Activated CD4-positive, alpha-beta memory T cell treated with anti-CD3 and anti-CD28 coated beads, Interleukin-2, amount 10 ng/mL, durations not matched to agents 7 days and 5 days (primary cell): ENCODE measurements at regions of chr11 and their contacts with region 1.

Region 1: GRCh38 chr11:10441652-10442503 is 13.2 kb upstream of the AMPD3 start:
- DNase-seq: peak; percentile 40
- H3K4me3 Mint-ChIP-seq: no peak overlapping the region
- H3K27ac Mint-ChIP-seq: peak overlapping the region; percentile 5
- H3K4me1 Mint-ChIP-seq: peaks cover 29% of the 10 kb centered on the region
- H3K27me3 Mint-ChIP-seq: peaks cover 9% of the 10 kb centered on the region

Region 2: DNA sequence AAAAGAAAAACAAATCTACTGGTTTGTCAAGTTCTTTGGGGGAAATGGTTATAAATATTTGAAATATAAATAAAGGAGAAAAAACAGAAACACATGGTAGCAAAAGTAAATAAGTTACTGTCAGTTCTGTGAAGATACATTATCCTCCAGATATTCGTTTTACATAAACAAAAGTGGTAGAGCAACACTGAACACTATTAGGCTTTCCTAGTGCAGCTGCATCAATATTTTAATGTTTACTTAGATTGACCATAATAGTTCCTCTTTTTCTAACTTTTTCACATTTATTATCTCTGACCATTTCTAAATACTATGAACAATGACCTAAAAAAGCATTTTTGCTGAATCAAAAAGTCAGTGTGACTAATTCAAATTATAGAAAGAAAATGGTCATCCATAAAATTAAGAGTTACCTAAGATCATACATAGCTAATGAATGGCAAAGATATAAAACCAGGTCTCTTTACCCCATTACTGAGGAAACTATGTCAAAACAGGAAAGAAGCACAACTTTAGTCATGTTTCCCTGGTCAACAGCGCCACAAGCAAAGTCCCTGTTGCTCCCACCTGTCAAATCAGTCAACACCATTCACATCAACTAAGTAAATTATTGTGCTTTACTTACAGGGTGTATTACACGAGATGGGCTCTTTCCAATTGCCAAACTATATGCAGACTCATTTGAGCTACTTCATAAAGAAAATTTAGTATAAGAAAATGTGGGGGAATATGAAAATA is 186.3 kb before region 1 on chr11:
- CTCF ChIA-PET with region 1: no interaction called
- POLR2A ChIA-PET with region 1: no interaction called
- DNase-seq: no peak
- H3K4me3 Mint-ChIP-seq: no peak overlapping the region
- H3K27ac Mint-ChIP-seq: no peak overlapping the region
- H3K4me1 Mint-ChIP-seq: no peaks in the 10 kb centered on the region
- H3K27me3 Mint-ChIP-seq: no peaks in the 10 kb centered on the region

Region 3: DNA sequence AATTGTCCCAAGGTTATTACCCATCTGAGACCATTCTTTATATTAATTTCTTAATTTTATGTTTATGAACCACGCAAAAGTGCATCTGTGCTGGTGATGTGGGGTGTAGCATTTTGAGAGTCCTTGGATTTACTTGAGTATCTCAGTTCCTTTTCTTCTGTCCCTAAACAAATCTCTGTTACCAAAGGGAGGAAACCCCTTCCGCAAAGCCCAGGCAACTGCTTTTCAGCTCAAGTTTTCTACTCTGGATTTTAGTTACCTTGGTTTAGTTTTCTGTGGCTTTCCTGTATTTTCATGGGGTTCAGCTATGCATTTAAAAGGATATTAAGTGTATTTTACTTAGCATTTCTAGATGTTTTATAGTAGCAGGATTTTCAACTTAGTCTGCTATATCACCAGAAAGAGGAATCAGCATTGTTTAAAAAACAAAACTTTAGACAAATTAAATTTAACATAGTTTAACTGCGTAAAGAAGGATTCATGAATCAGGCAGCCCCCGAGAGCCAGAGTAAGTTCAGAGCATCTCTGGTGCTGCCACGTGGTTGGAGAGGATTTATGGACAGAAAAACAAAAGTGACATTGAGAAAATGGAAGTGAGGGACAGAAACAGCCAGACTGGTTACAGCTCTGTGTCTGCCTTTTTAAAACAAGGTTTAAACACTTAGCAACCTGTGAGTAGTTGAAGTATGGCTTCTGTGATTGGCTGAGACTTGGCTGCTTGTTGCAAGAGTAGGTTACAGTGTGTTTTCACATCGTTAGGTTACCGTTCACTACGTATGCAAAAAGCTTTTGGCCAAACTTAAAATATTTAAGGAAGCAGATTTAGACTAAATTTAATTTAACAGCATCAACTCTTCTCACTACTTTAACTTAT is 127.4 kb before region 1 on chr11:
- CTCF ChIA-PET with region 1: no interaction called
- POLR2A ChIA-PET with region 1: no interaction called
- DNase-seq: no peak
- H3K4me3 Mint-ChIP-seq: no peak overlapping the region
- H3K27ac Mint-ChIP-seq: no peak overlapping the region
- H3K4me1 Mint-ChIP-seq: peaks cover 7% of the 10 kb centered on the region
- H3K27me3 Mint-ChIP-seq: peaks cover 35% of the 10 kb centered on the region

Region 4: DNA sequence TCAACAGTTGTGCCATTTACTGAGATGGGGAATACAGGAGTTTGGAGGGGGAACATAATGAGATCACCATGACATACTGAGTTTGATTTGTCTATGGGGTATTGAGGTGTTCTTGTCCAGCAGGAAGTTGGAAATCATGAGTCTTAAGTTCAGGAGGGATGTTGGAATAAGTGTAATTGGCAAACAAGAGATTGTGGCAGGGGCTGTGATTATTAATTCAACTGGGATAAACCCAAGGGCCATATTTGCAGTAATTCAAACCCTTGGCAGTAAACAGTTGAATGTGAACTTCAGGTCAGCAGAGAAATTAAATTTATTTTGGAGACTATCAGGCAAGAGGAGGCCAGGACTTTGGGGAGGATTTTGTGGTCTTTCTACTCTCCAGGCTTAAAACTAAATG is 103.6 kb before region 1 on chr11:
- CTCF ChIA-PET with region 1: no interaction called
- POLR2A ChIA-PET with region 1: no interaction called
- DNase-seq: no peak
- H3K4me3 Mint-ChIP-seq: no peak overlapping the region
- H3K27ac Mint-ChIP-seq: no peak overlapping the region
- H3K4me1 Mint-ChIP-seq: no peaks in the 10 kb centered on the region
- H3K27me3 Mint-ChIP-seq: peaks cover 29% of the 10 kb centered on the region

Region 5: GRCh38 chr11:10455637-10456487 is 14.0 kb after region 1 on chr11:
- CTCF ChIA-PET with region 1: interaction called, 25 read pairs
- POLR2A ChIA-PET with region 1: interaction called, 16 read pairs
- DNase-seq: peak; percentile 85
- H3K4me3 Mint-ChIP-seq: peak overlapping the region; percentile 84
- H3K27ac Mint-ChIP-seq: peak overlapping the region; percentile 90
- H3K4me1 Mint-ChIP-seq: peaks cover 78% of the 10 kb centered on the region
- H3K27me3 Mint-ChIP-seq: no peaks in the 10 kb centered on the region